ENCODE measurements at regions of chr4 and their contacts with region 1.

Region 1: GRCh38 chr4:147866532-147867271 is 134.8 kb downstream of the ARHGAP10 start:
- DNase-seq: peak; percentile 94
- H3K4me3 Mint-ChIP-seq: no peak overlapping the region
- H3K27ac Mint-ChIP-seq: no peak overlapping the region
- H3K4me1 Mint-ChIP-seq: peaks cover 6% of the 10 kb centered on the region
- H3K27me3 Mint-ChIP-seq: no peaks in the 10 kb centered on the region

Region 2: DNA sequence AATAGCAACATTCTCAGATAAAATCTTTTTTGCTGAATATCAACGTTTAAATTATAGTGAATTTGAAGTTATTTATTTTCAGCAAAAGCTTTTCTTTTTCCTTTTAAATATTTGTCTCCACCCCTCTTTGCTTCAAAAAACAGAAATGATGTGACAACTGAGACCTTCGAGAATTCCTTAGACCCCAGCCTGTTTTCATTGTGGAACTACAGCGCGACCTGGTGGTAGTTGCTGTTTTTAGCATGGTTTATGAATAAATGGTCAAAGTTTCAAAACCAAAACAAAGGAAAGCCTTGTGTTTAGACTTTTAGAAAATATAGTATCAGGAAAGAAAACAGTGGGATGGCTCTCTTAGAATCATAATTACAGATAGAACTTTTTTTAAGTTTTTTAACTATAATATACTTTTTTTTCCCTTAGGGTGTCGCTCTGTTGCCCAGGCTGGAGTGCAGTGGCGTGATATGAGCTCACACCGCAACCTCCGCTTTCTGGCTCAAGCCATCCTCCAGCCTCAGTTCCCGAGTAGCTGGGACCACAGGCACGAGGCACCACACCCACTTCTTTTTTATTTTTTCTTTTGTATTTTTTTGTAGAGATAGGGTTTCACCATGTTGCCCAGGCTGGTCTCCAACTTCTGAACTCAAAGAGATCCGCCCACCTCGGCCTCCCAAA is 276.3 kb before region 1 on chr4:
- CTCF ChIA-PET with region 1: interaction called, 20 read pairs
- POLR2A ChIA-PET with region 1: no interaction called
- DNase-seq: peak; percentile 48
- H3K4me3 Mint-ChIP-seq: no peak overlapping the region
- H3K27ac Mint-ChIP-seq: no peak overlapping the region
- H3K4me1 Mint-ChIP-seq: peaks cover 5% of the 10 kb centered on the region
- H3K27me3 Mint-ChIP-seq: peaks cover 14% of the 10 kb centered on the region

Region 3: DNA sequence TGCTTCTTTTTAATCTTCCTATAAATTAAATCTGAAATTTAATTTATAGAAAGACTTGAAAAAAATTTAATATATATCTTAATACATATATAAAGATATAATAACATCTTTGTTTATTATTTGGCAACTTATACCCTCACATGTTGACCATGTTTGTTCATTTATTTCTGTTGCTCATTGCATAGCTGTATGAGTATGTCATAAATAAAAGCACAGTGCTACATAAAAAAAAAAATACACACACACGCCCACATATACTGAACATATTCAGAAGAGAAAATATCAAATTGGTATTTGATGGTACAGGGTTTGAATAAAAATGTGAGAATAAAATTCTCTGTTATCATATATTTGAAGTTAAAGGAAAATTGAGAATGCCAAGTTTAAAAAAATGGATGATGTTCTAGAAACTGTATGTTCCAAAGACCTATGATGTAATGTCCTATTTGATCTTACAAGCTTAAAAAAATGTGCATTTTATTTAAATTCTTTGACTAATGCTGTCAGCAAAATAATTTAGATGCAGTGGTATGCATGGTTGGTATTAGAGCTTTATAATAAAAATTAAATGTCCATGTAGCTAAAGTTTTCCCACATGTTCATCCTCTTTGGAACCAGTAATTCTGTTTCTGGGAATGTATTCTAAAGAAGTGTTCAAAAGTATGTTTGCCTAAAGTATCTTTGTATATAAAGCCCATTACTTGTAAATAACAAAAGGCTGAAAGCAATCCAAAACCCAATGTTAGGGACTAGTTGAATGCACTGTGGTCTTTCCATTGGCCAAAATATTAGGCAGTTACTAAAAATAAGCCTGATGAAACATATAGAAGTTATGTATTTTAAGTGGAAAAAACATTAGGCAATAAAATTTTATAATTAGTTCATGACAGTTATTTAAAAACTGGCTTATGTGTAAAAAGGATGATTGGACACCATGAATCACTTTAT is 236.6 kb before region 1 on chr4:
- CTCF ChIA-PET with region 1: interaction called, 15 read pairs
- POLR2A ChIA-PET with region 1: no interaction called
- DNase-seq: no peak
- H3K4me3 Mint-ChIP-seq: no peak overlapping the region
- H3K27ac Mint-ChIP-seq: no peak overlapping the region
- H3K4me1 Mint-ChIP-seq: no peaks in the 10 kb centered on the region
- H3K27me3 Mint-ChIP-seq: no peaks in the 10 kb centered on the region

Region 4: GRCh38 chr4:147683717-147684700 is 182.7 kb before region 1 on chr4 and contains the start of gene PRMT9:
- CTCF ChIA-PET with region 1: interaction called, 40 read pairs
- POLR2A ChIA-PET with region 1: interaction called, 3 read pairs
- DNase-seq: peak; percentile 91
- H3K4me3 Mint-ChIP-seq: peak within 1 kb of the TSS; percentile 89
- H3K27ac Mint-ChIP-seq: peak within 1 kb of the TSS; percentile 83
- H3K4me1 Mint-ChIP-seq: peaks cover 46% of the 10 kb centered on the region
- H3K27me3 Mint-ChIP-seq: peaks cover 7% of the 10 kb centered on the region
- total RNA-seq, gene PRMT9: 11.0 to 12.0 TPM

Region 5: DNA sequence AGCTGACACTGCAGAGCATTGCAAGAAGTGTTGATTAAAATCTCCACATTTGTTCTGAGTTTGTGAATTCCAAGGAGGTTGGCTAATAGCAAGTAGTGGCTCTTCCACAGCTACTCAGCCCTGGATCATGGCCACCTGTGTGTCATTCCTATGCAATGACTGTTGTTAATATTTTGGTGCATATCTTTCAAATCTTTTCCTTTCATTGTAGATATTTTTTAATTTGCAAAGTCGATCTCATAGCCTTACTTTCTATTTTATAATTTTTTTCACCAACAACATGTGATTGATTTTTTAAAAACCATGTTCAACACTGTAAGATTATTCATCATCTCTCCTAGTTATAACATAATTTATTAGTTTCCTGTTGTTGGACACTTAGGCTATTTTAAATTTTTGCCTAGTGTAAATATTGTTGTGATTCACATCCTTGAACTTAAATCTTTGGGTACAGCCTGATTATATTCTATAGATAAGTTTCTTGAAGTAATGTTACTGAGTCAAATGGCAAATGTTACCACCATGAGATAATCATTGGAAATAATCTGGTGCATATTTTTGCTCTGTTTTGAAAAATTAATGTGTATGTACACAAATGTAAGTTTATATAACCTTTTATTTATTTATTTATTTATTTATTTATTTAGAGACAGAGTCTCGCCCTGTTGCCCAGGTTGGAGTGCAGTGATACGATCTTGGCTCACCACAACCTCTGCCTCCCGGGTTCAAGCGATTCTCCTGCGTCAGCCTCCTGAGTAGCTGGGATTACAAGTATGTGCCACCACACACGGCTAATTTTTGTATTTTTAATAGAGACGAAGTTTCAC is 151.9 kb before region 1 on chr4:
- CTCF ChIA-PET with region 1: interaction called, 88 read pairs
- POLR2A ChIA-PET with region 1: no interaction called
- DNase-seq: no peak
- H3K4me3 Mint-ChIP-seq: no peak overlapping the region
- H3K27ac Mint-ChIP-seq: no peak overlapping the region
- H3K4me1 Mint-ChIP-seq: peaks cover 7% of the 10 kb centered on the region
- H3K27me3 Mint-ChIP-seq: peaks cover 13% of the 10 kb centered on the region

Region 6: GRCh38 chr4:147786031-147786430 is 80.7 kb before region 1 on chr4:
- CTCF ChIA-PET with region 1: interaction called, 18 read pairs
- POLR2A ChIA-PET with region 1: no interaction called
- DNase-seq: no peak
- H3K4me3 Mint-ChIP-seq: no peak overlapping the region
- H3K27ac Mint-ChIP-seq: no peak overlapping the region
- H3K4me1 Mint-ChIP-seq: peaks cover 33% of the 10 kb centered on the region
- H3K27me3 Mint-ChIP-seq: no peaks in the 10 kb centered on the region

Region 7: DNA sequence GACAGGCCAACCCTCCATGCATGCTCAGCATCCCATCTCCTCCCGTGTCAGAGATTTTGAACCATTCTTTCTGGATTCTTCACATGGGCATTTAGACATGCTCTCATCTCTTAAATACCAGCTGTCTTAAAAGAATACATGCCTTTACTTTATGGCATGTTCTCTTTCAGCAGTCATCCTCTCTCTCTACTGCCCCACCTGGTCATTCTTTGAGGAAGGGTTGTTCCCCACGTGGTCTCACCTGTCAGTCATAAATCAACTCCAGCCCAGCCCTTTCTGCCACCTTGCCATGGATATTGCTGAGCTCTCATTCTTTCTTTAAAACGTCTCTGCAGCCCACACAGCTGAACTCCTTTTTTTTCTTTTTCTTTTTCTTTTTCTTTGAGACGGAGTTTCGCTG is 23.5 kb before region 1 on chr4:
- CTCF ChIA-PET with region 1: interaction called, 57 read pairs
- POLR2A ChIA-PET with region 1: no interaction called
- DNase-seq: no peak
- H3K4me3 Mint-ChIP-seq: no peak overlapping the region
- H3K27ac Mint-ChIP-seq: no peak overlapping the region
- H3K4me1 Mint-ChIP-seq: peaks cover 2% of the 10 kb centered on the region
- H3K27me3 Mint-ChIP-seq: no peaks in the 10 kb centered on the region

Measured in activated CD4-positive, alpha-beta memory T cell treated with anti-CD3 and anti-CD28 coated beads, Interleukin-2, amount 10 ng/mL, durations not matched to agents 7 days and 5 days (primary cell).